CD8-positive, alpha-beta memory T cell (primary cell): ENCODE measurements at regions of chr3 and their contacts with region 1.

Region 1: DNA sequence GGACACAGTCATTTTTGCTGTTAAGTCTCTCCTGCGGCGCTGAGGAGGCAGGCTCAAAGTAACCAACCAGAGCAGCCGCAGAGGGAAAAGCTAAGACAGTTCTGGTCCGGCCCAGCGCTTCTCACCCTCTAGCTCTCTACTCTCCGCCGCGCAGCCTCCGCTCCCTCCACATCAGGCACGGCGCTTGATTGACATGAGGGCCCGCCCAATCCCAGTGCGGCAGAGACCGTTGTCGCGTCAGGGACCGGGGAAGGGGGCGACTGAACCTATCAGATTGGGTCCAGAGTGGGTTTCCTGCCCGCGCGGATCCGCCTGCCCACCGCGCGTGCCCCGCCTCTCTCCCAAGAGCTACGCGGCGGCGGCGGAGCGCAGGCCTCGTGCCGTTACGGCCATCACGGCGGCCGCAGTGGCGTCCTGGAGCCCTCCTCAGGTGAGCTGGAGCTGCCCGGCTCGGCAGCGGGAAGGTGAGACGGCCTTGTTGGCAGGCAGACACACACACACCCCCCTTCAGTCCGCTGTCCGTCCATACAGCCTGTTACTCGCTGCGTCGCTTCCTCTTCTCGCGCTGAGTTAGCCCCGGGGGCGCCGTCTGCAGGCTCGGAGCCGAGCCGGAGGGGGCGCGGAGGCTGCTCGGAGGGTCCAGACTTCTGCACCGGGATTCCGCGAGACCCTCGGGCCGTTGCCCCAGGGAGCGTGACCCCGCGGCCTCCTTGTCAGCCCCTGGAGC is at the start of gene NCK1:
- DNase-seq: peak; percentile 97 to 99 (median 99)
- H3K4me3 ChIP-seq: peak within 1 kb of the TSS; percentile 96
- H3K4me3 Mint-ChIP-seq: peak within 1 kb of the TSS; percentile 91 to 99 (median 97)
- H3K27ac ChIP-seq: peak within 1 kb of the TSS; percentile 90
- H3K27ac Mint-ChIP-seq: peak within 1 kb of the TSS; percentile 94 to 99 (median 98)
- H3K4me1 ChIP-seq: peaks cover 23% of the 10 kb centered on the region
- H3K4me1 Mint-ChIP-seq: peaks cover 50 to 78% (median 77%) of the 10 kb centered on the region in 3 donors
- H3K27me3 ChIP-seq: no peaks in the 10 kb centered on the region
- H3K27me3 Mint-ChIP-seq: peaks cover 0 to under 1% of the 10 kb centered on the region in 2 donors
- total RNA-seq, gene NCK1: 30.9 to 33.3 TPM

Region 2: DNA sequence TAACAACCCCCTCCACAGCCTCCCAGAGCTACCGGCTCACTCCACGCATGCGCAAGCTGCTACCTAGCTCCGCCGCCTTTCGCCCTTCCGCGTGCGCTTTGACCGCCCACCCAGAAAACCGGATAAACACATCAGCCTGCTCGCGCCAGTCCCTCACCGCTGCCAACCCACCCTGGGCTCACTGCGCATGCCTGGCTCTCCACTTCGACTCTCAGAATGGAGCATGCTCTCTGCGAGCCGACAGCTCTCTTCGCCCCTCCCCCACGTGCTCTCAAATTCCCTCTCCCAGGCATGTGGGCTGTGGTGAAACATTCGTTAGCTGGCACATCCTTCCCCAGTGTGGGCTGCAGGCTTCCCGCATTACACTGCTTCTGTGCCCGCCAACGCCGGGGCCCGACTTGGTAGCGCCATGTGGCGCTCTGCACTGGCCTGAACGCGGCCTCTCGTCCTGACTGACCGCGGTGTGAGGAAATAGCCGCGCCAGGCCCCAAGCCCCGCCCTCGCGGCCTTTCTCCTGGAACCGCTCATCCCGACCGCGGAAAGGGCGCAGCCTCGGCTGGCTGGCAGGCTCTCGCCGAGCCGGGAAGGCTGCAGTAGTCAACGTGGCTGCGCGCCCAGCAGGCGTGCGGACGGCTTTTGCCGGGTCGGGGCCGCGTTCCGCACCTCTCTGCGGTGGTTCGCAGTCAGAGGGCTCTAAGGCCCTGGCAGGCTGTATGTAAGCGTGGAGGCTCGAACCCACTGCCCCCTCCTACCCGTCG is 665.5 kb before region 1 on chr3:
- CTCF ChIA-PET with region 1: interaction called, 4 read pairs
- POLR2A ChIA-PET with region 1: interaction called, 10 read pairs
- DNase-seq: peak; percentile 96 to 99 (median 97)
- H3K4me3 ChIP-seq: peak overlapping the region; percentile 89
- H3K4me3 Mint-ChIP-seq: peak overlapping the region; percentile 96 to 100 (median 98)
- H3K27ac ChIP-seq: peak overlapping the region; percentile 84
- H3K27ac Mint-ChIP-seq: peak overlapping the region; percentile 98 to 100 (median 99)
- H3K4me1 ChIP-seq: peaks cover 24% of the 10 kb centered on the region
- H3K4me1 Mint-ChIP-seq: peaks cover 32 to 39% (median 39%) of the 10 kb centered on the region in 3 donors
- H3K27me3 ChIP-seq: no peaks in the 10 kb centered on the region
- H3K27me3 Mint-ChIP-seq: peaks cover 0 to 15% of the 10 kb centered on the region in 2 donors

Region 3: DNA sequence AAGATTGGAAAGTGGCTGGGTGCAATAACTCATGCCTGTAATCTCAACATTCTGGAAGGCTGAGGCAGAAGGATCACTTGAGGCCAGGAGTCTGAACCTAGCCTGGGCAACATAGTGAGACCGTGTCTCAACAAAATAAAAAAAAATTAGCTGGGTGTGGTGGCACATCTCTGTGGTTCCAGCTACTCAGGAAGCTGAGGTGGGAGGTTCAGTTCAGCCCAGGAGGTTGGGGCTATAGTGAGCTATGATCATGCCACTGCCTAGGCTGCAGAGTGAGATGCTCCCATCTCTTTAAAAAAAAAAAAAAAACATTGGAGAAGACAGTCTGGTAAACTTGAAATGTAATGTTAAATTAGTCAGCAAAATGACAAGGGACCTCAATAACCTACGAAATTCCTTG is 167.7 kb before region 1 on chr3:
- CTCF ChIA-PET with region 1: no interaction called
- POLR2A ChIA-PET with region 1: no interaction called
- DNase-seq: peak in 2 of 5 donors; percentile 2 to 33
- H3K4me3 ChIP-seq: no peak overlapping the region
- H3K4me3 Mint-ChIP-seq: peak overlapping the region in 6 of 7 donors; percentile 56 to 87 (median 66)
- H3K27ac ChIP-seq: no peak overlapping the region
- H3K27ac Mint-ChIP-seq: peak overlapping the region; percentile 42 to 90 (median 74)
- H3K4me1 ChIP-seq: peaks cover 38% of the 10 kb centered on the region
- H3K4me1 Mint-ChIP-seq: peaks cover 61 to 88% (median 87%) of the 10 kb centered on the region in 3 donors
- H3K27me3 ChIP-seq: no peaks in the 10 kb centered on the region
- H3K27me3 Mint-ChIP-seq: no peaks in the 10 kb centered on the region

Region 4: DNA sequence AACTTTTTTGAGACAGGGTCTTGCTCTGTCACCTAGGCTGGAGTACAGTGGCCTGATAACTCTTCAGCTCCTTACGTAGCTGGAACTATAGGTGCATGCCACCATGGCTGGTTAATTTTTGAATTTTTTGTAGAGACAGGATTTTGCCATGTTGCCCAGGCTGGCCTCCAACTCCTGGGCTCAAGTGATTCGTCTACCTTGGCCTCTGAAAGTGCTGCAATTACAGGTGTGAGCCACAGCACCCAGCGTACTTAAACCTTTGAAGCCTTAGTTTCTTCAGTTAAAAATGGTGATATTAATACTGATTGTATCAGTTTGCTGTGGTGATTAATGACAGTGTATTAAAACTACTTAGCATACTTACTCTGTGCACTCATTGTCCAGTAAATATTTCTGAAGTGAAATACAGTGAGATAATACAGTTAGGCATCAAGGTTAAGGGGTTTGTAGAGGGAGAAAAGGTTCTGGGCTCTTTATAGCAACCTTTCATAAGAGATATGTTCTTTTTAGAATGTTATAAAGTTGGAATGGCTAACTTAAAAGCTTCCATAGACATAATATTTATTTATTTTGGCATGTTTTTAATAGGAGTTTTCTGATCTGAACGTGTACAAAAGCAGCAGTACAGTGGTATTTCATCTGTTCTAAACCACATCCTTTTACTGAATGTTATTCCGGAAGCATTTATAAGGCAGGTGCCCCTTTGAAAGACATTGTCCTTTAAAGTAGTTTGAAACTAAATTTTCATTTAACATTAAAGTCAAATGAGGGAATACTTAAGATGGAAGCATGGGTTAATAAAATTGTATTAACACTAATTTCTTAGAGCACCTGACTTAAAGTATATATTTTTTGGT is 23.5 kb after region 1 on chr3:
- CTCF ChIA-PET with region 1: interaction called, 6 read pairs
- POLR2A ChIA-PET with region 1: interaction called, 13 read pairs
- DNase-seq: peak in 2 of 5 donors; percentile 17 to 37
- H3K4me3 ChIP-seq: peak overlapping the region; percentile 47
- H3K4me3 Mint-ChIP-seq: peak overlapping the region; percentile 35 to 78 (median 71)
- H3K27ac ChIP-seq: no peak overlapping the region
- H3K27ac Mint-ChIP-seq: peak overlapping the region; percentile 43 to 94 (median 78)
- H3K4me1 ChIP-seq: peaks cover 65% of the 10 kb centered on the region
- H3K4me1 Mint-ChIP-seq: peaks cover 77 to 90% (median 85%) of the 10 kb centered on the region in 3 donors
- H3K27me3 ChIP-seq: no peaks in the 10 kb centered on the region
- H3K27me3 Mint-ChIP-seq: peaks cover 0 to 1% of the 10 kb centered on the region in 2 donors

Region 5: GRCh38 chr3:136909187-136909586 is 47.1 kb after region 1 on chr3:
- CTCF ChIA-PET with region 1: interaction called, 13 read pairs
- POLR2A ChIA-PET with region 1: interaction called, 8 read pairs
- DNase-seq: no peak
- H3K4me3 ChIP-seq: no peak overlapping the region
- H3K4me3 Mint-ChIP-seq: peak overlapping the region; percentile 0 to 70 (median 49)
- H3K27ac ChIP-seq: no peak overlapping the region
- H3K27ac Mint-ChIP-seq: peak overlapping the region; percentile 71 to 93 (median 88)
- H3K4me1 ChIP-seq: peaks cover 74% of the 10 kb centered on the region
- H3K4me1 Mint-ChIP-seq: peaks cover 80 to 90% (median 84%) of the 10 kb centered on the region in 3 donors
- H3K27me3 ChIP-seq: no peaks in the 10 kb centered on the region
- H3K27me3 Mint-ChIP-seq: no peaks in the 10 kb centered on the region

Region 6: DNA sequence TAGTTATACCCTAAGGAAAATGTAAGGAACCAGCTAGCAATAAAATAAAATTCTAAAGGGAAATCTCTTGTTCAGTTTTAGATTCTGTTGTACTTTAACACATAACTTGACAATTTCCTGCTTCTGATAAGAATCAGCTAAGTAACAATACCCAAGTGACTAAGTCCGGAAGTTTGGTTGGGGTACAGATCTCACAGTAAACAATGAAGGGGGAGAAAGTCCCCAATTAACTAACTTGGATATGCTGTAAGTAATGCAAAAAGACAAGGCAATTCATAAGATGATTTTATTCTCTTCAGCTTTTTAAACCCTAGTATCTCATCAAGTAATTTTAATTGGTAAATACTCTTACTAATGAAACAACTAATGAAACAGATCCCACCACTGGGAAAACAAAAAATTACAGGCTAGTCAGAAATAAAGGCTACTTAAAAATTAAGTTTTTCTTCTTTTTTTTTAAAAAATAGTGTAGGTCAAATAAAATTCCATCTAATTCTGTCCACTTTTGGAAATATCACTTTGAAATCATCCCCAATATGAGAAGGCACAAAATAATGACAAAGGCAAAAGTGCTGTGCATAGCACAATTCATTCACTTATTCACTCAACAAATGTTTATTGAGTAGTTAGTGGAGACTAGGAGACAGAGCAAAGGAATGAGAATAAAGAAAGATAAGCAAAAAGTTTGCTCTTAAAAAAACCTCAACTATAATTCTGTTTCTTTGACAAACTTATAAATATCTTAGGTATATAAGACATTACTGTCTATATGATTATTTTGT is 57.9 kb after region 1 on chr3:
- CTCF ChIA-PET with region 1: interaction called, 6 read pairs
- POLR2A ChIA-PET with region 1: interaction called, 15 read pairs
- DNase-seq: peak in 3 of 5 donors; percentile 10 to 68 (median 29)
- H3K4me3 ChIP-seq: no peak overlapping the region
- H3K4me3 Mint-ChIP-seq: peak overlapping the region; percentile 10 to 88 (median 72)
- H3K27ac ChIP-seq: peak overlapping the region; percentile 32
- H3K27ac Mint-ChIP-seq: peak overlapping the region; percentile 79 to 99 (median 95)
- H3K4me1 ChIP-seq: peaks cover 65% of the 10 kb centered on the region
- H3K4me1 Mint-ChIP-seq: peaks cover 86 to 96% (median 95%) of the 10 kb centered on the region in 3 donors
- H3K27me3 ChIP-seq: no peaks in the 10 kb centered on the region
- H3K27me3 Mint-ChIP-seq: no peaks in the 10 kb centered on the region

Region 7: GRCh38 chr3:137013955-137014688 is 152.1 kb after region 1 on chr3:
- CTCF ChIA-PET with region 1: interaction called, 14 read pairs
- POLR2A ChIA-PET with region 1: interaction called, 4 read pairs
- DNase-seq: peak; percentile 71 to 87 (median 77)
- H3K4me3 ChIP-seq: peak overlapping the region; percentile 63
- H3K4me3 Mint-ChIP-seq: peak overlapping the region; percentile 3 to 84 (median 76)
- H3K27ac ChIP-seq: peak overlapping the region; percentile 49
- H3K27ac Mint-ChIP-seq: peak overlapping the region in 4 of 8 donors; percentile 53 to 84 (median 69)
- H3K4me1 ChIP-seq: peaks cover 11% of the 10 kb centered on the region
- H3K4me1 Mint-ChIP-seq: peaks cover 5 to 11% (median 9%) of the 10 kb centered on the region in 3 donors
- H3K27me3 ChIP-seq: no peaks in the 10 kb centered on the region
- H3K27me3 Mint-ChIP-seq: no peaks in the 10 kb centered on the region